HCT116 (cell line): ENCODE measurements at regions of chr9 and their contacts with region 1.

Region 1: GRCh38 chr9:129487642-129488409 is 133.1 kb downstream of the C9orf50 start:
- DNase-seq: no peak
- ATAC-seq: peak; percentile 18
- H3K4me3 ChIP-seq: peak overlapping the region; percentile 2 to 58
- H3K27ac ChIP-seq: peak overlapping the region; percentile 100
- H3K4me1 ChIP-seq: peaks cover 86 to 100% of the 10 kb centered on the region in 2 experiments
- H3K27me3 ChIP-seq: no peaks in the 10 kb centered on the region
- CTCF ChIP-seq: no peak
- POLR2A ChIP-seq: peak; percentile 41
- RAD21 ChIP-seq: no peak

Region 2: DNA sequence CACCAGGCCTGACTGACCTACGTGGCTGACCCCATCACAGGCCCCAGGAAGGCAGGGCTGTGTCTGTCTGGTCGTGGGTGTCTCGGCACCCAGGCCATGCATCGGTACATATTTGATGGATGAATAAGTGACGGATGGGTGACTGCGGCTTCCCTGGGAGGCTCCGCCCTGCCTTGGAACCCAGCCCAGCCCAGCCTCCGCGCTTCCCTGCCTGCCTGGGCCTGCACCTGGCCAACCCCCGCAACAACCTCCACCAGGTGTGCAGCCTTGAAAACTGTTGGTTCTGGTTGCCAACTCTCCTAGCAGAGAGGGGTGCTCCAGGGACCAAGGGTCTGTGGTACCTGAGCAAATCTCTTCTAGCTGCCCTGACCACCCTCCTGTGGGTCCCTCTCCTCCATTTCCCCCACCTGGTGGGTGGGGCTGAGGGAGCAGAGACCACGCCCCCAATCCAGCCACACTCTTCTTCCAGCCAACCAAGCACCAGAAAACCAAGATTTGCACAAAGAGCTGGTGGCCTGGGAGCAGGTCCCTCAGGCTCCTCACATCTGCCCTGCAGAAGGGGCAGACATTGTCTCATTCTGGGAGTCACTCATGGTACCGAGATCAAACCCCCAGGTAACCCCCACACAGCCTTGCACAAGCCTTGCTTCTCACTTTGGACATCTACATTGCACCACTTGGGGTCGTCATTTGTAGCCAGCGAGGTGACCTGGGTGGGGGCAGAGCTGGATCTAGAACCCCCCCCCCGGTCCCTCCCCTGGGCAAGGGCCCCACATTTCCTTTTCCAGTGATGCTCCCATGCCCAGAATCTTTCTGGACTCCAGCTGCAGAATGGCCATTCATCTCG is 209.2 kb before region 1 on chr9:
- CTCF ChIA-PET with region 1: no interaction called
- POLR2A ChIA-PET with region 1: no interaction called
- RAD21 ChIA-PET with region 1: no interaction called
- intact Hi-C with region 1: loop called (anchors 5 kb)
- DNase-seq: peak; percentile 75
- ATAC-seq: peak; percentile 96
- H3K4me3 ChIP-seq: peak overlapping the region; percentile 24 to 44; a peak in 3 of 4 replicates
- H3K27ac ChIP-seq: peak overlapping the region; percentile 65
- H3K4me1 ChIP-seq: peaks cover 21 to 35% of the 10 kb centered on the region in 2 experiments
- H3K27me3 ChIP-seq: no peaks in the 10 kb centered on the region
- CTCF ChIP-seq: no peak
- POLR2A ChIP-seq: peak; percentile 19
- RAD21 ChIP-seq: no peak

Region 3: DNA sequence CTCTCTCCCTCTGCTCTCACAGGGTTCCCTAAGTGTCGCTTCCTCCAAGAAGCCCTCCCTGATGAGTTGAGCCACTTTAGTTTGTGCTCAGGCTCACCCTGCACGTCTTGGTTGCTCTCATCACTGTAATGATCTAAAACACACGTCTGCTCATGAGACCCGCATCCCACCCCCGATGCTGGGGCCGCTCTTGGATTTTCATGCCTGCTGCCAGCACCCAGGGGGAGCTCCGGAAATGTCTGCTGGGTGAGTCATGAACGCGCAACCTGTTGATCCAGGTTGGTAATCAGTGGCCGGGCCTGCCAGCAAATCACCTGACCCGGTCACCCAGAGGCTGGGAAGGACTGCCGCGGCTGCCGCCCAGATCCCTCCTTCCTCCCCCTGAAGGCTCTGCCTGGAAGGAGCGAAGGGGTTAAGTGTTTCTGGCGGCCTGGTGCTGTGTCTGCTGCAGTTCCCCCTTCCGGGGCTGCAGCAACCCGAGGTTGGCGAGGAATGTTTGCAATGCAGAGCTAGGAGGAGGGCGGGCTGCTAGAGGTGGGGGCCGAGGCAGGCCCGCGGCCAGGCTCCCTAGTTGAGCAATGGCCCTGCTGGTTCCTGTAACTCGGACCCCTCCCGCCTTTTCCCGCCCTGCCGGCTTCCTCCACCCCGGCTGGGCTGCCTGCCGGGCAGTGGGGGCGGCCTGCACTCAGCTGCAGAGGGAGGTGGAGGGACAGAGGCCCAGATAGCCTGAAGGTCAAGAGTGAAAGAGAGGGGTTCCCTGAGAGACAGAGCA is 153.7 kb before region 1 on chr9:
- CTCF ChIA-PET with region 1: no interaction called
- POLR2A ChIA-PET with region 1: interaction called, 9 read pairs
- RAD21 ChIA-PET with region 1: no interaction called
- intact Hi-C with region 1: loop called (anchors 5 kb)
- DNase-seq: peak; percentile 93
- ATAC-seq: peak; percentile 81
- H3K4me3 ChIP-seq: peak overlapping the region; percentile 44 to 52
- H3K27ac ChIP-seq: peak overlapping the region; percentile 100
- H3K4me1 ChIP-seq: peaks cover 54 to 68% of the 10 kb centered on the region in 2 experiments
- H3K27me3 ChIP-seq: no peaks in the 10 kb centered on the region
- CTCF ChIP-seq: no peak
- POLR2A ChIP-seq: peak; percentile 16
- RAD21 ChIP-seq: no peak

Region 4: GRCh38 chr9:129737479-129738274 is 249.9 kb after region 1 on chr9:
- CTCF ChIA-PET with region 1: no interaction called
- POLR2A ChIA-PET with region 1: no interaction called
- RAD21 ChIA-PET with region 1: no interaction called
- intact Hi-C with region 1: no loop called
- DNase-seq: peak; percentile 51
- ATAC-seq: peak; percentile 90
- H3K4me3 ChIP-seq: peak overlapping the region; percentile 38 to 61
- H3K27ac ChIP-seq: peak overlapping the region; percentile 77
- H3K4me1 ChIP-seq: peaks cover 7 to 17% of the 10 kb centered on the region in 2 experiments; a peak in 3 of 4 replicates
- H3K27me3 ChIP-seq: no peaks in the 10 kb centered on the region
- CTCF ChIP-seq: peak; percentile 86 to 96 (median 92)
- POLR2A ChIP-seq: no peak
- RAD21 ChIP-seq: peak; percentile 98